ENCODE measurements at regions of chr19 and their contacts with region 1.

Region 1: GRCh38 chr19:48933382-48933932 is at the start of gene DHDH:
- DNase-seq: peak; percentile 93 to 94
- H3K4me3 ChIP-seq: peak within 1 kb of the TSS; percentile 56
- H3K27ac ChIP-seq: no peak within 1 kb of the TSS
- H3K4me1 ChIP-seq: peaks cover 12% of the 10 kb centered on the region
- H3K27me3 ChIP-seq: no peaks in the 10 kb centered on the region
- CTCF ChIP-seq: no peak
- total RNA-seq, gene DHDH: 2.0 and 2.4 TPM in 2 replicates

Region 2: DNA sequence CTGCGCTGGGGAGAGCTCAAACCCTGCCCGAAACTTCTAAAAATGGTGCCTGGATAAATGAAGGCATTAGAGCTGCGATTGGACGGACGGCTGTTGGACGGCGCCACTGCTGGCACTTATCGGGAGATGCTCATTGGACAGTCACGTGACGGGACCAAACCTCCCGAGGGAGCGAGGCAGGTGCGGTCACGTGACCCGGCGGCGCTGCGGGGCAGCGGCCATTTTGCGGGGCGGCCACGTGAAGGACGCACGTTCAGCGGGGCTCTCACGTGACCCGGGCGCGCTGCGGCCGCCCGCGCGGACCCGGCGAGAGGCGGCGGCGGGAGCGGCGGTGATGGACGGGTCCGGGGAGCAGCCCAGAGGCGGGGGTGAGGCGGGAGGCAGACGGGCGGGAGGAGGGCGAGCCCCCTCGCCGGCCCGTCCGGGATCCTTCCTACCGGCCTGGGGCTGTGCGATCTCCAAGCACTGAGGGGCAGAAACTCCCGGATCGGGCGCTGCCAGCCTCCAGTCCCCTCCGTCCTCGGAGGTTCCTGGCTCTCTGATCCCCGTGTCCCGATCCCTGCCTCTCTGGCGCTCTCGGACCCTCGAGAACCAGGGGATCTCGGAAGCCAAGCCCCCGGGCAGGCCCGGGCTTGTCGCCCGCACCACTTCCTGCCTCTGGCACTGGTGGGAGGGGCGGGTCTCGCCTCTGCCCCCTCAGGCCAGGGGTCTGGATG is 21.3 kb after region 1 on chr19 and contains the start of gene BAX:
- CTCF ChIA-PET with region 1: no interaction called
- POLR2A ChIA-PET with region 1: no interaction called
- intact Hi-C with region 1: loop called (anchors 1 kb)
- DNase-seq: peak; percentile 88 to 97
- H3K4me3 ChIP-seq: peak within 1 kb of the TSS; percentile 92
- H3K27ac ChIP-seq: peak within 1 kb of the TSS; percentile 40
- H3K4me1 ChIP-seq: peaks cover 10% of the 10 kb centered on the region; the same call in 1 of the 2 replicates
- H3K27me3 ChIP-seq: no peaks in the 10 kb centered on the region
- CTCF ChIP-seq: no peak; the same call in 1 of the 2 replicates
- total RNA-seq, gene BAX: 140 and 198 TPM in 2 replicates

Measured in PC-9 (cell line).